Activated B cell treated with CpG ODN at 0.5 μM for 24 hours (primary cell): ENCODE measurements at regions of chr11 and their contacts with region 1.

Region 1: GRCh38 chr11:119168471-119169281 is at the start of gene NLRX1:
- DNase-seq: peak; percentile 74
- ATAC-seq: peak; percentile 97
- H3K4me3 Mint-ChIP-seq: peak within 1 kb of the TSS; percentile 86
- H3K27ac Mint-ChIP-seq: peak within 1 kb of the TSS; percentile 50
- H3K4me1 Mint-ChIP-seq: peaks cover 5% of the 10 kb centered on the region
- H3K27me3 Mint-ChIP-seq: no peaks in the 10 kb centered on the region
- CTCF ChIP-seq: peak; percentile 69
- total RNA-seq, gene NLRX1: 9.8 TPM in 2 replicates

Region 2: GRCh38 chr11:117919781-117920221 is 1248.9 kb before region 1 on chr11:
- CTCF ChIA-PET with region 1: no interaction called
- POLR2A ChIA-PET with region 1: no interaction called
- intact Hi-C with region 1: no loop called
- DNase-seq: no peak
- ATAC-seq: peak; percentile 86
- H3K4me3 Mint-ChIP-seq: peak overlapping the region; percentile 24
- H3K27ac Mint-ChIP-seq: peak overlapping the region; percentile 84
- H3K4me1 Mint-ChIP-seq: peaks cover 16% of the 10 kb centered on the region
- H3K27me3 Mint-ChIP-seq: no peaks in the 10 kb centered on the region
- CTCF ChIP-seq: no peak

Region 3: DNA sequence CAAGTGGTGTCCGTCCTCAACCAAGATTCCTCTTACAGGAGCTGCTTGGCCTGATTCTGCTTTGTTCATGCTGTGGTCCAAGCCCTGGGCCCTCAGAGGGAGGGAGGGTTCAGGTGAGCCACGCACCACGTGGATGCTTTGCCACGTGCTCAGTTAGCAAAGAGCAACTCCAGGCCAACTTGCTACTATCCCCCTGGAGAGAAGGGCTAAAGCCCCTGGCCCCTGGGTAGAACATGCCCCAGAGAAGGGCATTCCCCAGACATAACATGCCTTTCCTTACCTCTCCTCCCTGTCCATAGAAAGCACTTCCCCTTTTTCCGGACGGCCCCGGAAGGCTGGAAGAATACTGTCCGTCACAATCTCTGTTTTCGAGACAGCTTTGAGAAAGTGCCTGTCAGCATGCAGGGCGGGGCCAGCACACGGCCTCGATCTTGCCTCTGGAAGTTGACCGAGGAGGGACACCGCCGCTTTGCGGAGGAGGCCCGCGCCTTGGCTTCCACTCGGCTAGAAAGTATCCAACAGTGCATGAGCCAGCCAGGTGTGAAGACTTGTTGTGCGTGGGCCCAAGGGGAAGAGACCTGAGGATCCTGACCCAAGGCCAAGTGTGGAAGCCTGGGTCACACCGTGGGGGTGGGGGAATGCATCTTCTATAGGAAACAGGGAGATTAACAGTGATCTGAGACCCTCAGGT is 188.3 kb before region 1 on chr11:
- CTCF ChIA-PET with region 1: no interaction called
- POLR2A ChIA-PET with region 1: no interaction called
- intact Hi-C with region 1: no loop called
- DNase-seq: no peak
- ATAC-seq: no peak
- H3K4me3 Mint-ChIP-seq: no peak overlapping the region
- H3K27ac Mint-ChIP-seq: no peak overlapping the region
- H3K4me1 Mint-ChIP-seq: no peaks in the 10 kb centered on the region
- H3K27me3 Mint-ChIP-seq: peaks cover 15% of the 10 kb centered on the region
- CTCF ChIP-seq: no peak

Region 4: DNA sequence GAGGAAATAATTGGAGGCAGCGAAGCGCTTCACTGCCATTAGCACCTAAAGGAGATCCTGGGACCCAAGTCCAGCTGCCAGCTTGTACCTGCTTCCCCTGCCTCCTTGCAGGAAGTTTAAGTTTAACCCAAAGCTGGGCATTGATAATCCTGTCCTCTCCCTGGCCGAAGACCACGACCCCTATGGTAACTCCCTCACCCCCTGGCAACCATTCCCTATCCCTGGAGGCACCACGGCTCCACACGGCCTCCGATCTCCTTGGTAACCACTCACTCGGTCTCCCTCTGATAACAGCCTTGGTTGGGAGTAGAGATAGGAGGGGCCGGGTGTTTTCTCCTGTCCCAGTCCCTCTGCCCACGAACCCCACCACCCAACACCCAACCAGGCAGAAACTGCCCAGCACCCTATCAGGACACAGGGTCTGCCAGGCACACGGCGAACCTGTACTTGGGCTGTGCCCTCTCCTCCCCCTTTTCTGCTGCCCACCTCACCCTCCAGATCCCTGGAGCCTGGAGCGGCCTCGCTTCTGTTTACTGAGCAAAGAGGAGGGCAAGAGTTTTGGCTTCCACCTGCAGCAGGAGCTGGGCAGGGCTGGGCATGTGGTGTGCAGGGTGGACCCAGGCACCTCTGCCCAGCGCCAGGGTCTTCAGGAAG is 17.4 kb after region 1 on chr11:
- CTCF ChIA-PET with region 1: no interaction called
- POLR2A ChIA-PET with region 1: interaction called, 6 read pairs
- intact Hi-C with region 1: loop called (anchors 2 kb)
- DNase-seq: no peak
- ATAC-seq: no peak
- H3K4me3 Mint-ChIP-seq: no peak overlapping the region
- H3K27ac Mint-ChIP-seq: no peak overlapping the region
- H3K4me1 Mint-ChIP-seq: peaks cover 8% of the 10 kb centered on the region
- H3K27me3 Mint-ChIP-seq: peaks cover 9% of the 10 kb centered on the region
- CTCF ChIP-seq: no peak

Region 5: GRCh38 chr11:119509969-119510401 is 341.3 kb after region 1 on chr11:
- CTCF ChIA-PET with region 1: no interaction called
- POLR2A ChIA-PET with region 1: no interaction called
- intact Hi-C with region 1: no loop called
- DNase-seq: no peak
- ATAC-seq: peak; percentile 84
- H3K4me3 Mint-ChIP-seq: no peak overlapping the region
- H3K27ac Mint-ChIP-seq: peak overlapping the region; percentile 75
- H3K4me1 Mint-ChIP-seq: peaks cover 35% of the 10 kb centered on the region
- H3K27me3 Mint-ChIP-seq: peaks cover 2% of the 10 kb centered on the region
- CTCF ChIP-seq: no peak